ENCODE measurements at regions of chr11 and their contacts with region 1.

Region 1: GRCh38 chr11:65497141-65498041 is 1.5 kb upstream of the MALAT1 start:
- DNase-seq: peak; percentile 91
- H3K4me3 ChIP-seq: peak overlapping the region; percentile 84 to 87
- H3K27ac ChIP-seq: peak overlapping the region; percentile 100
- H3K4me1 ChIP-seq: peaks cover 32 to 36% of the 10 kb centered on the region in 2 experiments
- H3K27me3 ChIP-seq: no peaks in the 10 kb centered on the region
- CTCF ChIP-seq: peak; percentile 15; the same call in 1 of the 2 replicates
- EP300 ChIP-seq: peak; percentile 92 to 95
- RAD21 ChIP-seq: peak; percentile 22

Region 2: GRCh38 chr11:65274735-65275682 is 222.4 kb before region 1 on chr11:
- CTCF ChIA-PET with region 1: no interaction called
- POLR2A ChIA-PET with region 1: no interaction called
- DNase-seq: peak; percentile 76
- H3K4me3 ChIP-seq: no peak overlapping the region
- H3K27ac ChIP-seq: peak overlapping the region; percentile 36 to 59; a peak in 3 of 4 replicates
- H3K4me1 ChIP-seq: peaks cover 0 to 34% of the 10 kb centered on the region in 2 experiments; a peak in 3 of 4 replicates
- H3K27me3 ChIP-seq: no peaks in the 10 kb centered on the region
- CTCF ChIP-seq: peak; percentile 87
- EP300 ChIP-seq: peak in 1 of 2 experiments; percentile 53; a peak in 1 of 4 replicates
- RAD21 ChIP-seq: peak; percentile 99

Region 3: DNA sequence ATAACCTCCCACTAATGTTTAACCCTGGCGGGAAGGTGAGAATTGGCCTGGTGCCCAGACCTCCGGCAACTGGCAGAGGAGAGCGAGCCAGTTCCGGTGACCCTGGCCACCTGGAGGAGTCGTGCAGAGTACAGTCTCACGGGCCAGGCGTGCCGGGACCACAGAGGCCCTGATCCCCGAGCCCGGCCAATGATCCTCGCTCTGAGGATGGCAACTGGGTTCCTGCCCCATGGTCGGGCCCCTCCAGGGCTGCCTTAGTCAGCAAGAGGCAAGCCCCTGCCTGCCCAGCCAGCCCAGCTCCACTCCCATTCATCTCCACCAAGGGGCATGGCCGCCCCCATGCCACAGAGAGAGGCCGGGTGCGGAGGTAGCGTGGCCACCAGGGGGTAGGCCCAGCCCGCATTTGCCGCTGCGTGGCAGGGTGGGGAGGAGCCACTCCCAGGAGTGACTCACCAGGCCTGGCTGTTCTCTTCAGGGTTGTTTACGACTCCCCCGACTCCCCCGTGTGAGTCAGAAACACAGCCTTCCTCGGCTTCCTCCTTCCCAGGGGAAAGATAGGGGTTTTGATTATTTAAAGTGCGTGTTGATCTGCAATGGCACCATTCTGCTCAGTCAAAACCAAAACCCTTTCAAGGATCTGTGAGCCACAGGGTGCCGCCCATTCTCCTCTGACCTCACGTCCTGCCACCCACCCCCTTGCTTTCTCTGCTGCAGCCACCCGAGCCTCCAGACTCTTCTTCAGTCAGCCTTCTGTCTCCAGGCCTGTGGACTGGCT is 115.2 kb before region 1 on chr11 and contains the start of gene SLC25A45:
- CTCF ChIA-PET with region 1: interaction called, 5 read pairs
- POLR2A ChIA-PET with region 1: interaction called, 24 read pairs
- DNase-seq: peak; percentile 89
- H3K4me3 ChIP-seq: peak within 1 kb of the TSS; percentile 44 to 61
- H3K27ac ChIP-seq: peak within 1 kb of the TSS; percentile 98 to 99
- H3K4me1 ChIP-seq: peaks cover 29 to 49% of the 10 kb centered on the region in 2 experiments; a peak in 3 of 4 replicates
- H3K27me3 ChIP-seq: no peaks in the 10 kb centered on the region
- CTCF ChIP-seq: peak; percentile 75
- EP300 ChIP-seq: peak; percentile 7 to 70; a peak in 1 of 4 replicates
- RAD21 ChIP-seq: peak; percentile 71
- polyA plus RNA-seq, gene SLC25A45: 3.1 and 3.6 TPM in 2 replicates

Region 4: GRCh38 chr11:65448418-65449105 is 48.8 kb before region 1 on chr11:
- CTCF ChIA-PET with region 1: interaction called, 3 read pairs
- POLR2A ChIA-PET with region 1: interaction called, 28 read pairs
- DNase-seq: no peak
- H3K4me3 ChIP-seq: no peak overlapping the region
- H3K27ac ChIP-seq: peak overlapping the region in 1 of 2 experiments; percentile 100; a peak in 2 of 4 replicates
- H3K4me1 ChIP-seq: peaks cover 0 to 15% of the 10 kb centered on the region in 2 experiments; a peak in 2 of 4 replicates
- H3K27me3 ChIP-seq: no peaks in the 10 kb centered on the region
- CTCF ChIP-seq: no peak
- EP300 ChIP-seq: no peak
- RAD21 ChIP-seq: no peak

Region 5: DNA sequence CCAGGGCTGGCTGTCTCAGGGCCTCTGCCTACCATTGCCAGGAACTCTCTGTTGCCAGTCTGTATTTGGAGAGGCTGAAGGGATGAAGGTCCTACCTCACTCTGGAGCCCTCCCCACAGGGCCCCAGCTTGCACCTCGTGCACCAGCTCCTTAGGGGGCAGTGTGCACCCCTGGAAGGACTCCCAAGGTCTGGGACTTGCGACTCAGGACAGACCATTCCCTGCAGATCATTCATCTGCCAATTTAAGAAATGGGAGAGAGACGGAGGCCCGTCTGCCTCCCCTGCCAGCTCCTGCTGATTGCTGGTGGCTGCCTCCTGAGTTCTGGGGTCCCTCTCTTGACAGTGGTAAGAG is 26.0 kb before region 1 on chr11:
- CTCF ChIA-PET with region 1: interaction called, 78 read pairs
- POLR2A ChIA-PET with region 1: interaction called, 591 read pairs
- DNase-seq: peak; percentile 70
- H3K4me3 ChIP-seq: peak overlapping the region; percentile 12 to 47; a peak in 3 of 4 replicates
- H3K27ac ChIP-seq: peak overlapping the region; percentile 68 to 99
- H3K4me1 ChIP-seq: peaks cover 10 to 16% of the 10 kb centered on the region in 2 experiments; a peak in 3 of 4 replicates
- H3K27me3 ChIP-seq: no peaks in the 10 kb centered on the region
- CTCF ChIP-seq: peak; percentile 72
- EP300 ChIP-seq: no peak
- RAD21 ChIP-seq: peak; percentile 75

Region 6: GRCh38 chr11:65477149-65477965 is 20.0 kb before region 1 on chr11:
- CTCF ChIA-PET with region 1: interaction called, 78 read pairs
- POLR2A ChIA-PET with region 1: interaction called, 591 read pairs
- DNase-seq: peak; percentile 98
- H3K4me3 ChIP-seq: peak overlapping the region; percentile 67 to 70
- H3K27ac ChIP-seq: peak overlapping the region; percentile 91 to 100
- H3K4me1 ChIP-seq: peaks cover 30 to 38% of the 10 kb centered on the region in 2 experiments
- H3K27me3 ChIP-seq: no peaks in the 10 kb centered on the region
- CTCF ChIP-seq: no peak
- EP300 ChIP-seq: peak; percentile 25 to 60; a peak in 2 of 4 replicates
- RAD21 ChIP-seq: no peak

Measured in SK-N-SH (cell line).